AG04449 (cell line): ENCODE measurements at regions of chr11 and their contacts with region 1.

Region 1: DNA sequence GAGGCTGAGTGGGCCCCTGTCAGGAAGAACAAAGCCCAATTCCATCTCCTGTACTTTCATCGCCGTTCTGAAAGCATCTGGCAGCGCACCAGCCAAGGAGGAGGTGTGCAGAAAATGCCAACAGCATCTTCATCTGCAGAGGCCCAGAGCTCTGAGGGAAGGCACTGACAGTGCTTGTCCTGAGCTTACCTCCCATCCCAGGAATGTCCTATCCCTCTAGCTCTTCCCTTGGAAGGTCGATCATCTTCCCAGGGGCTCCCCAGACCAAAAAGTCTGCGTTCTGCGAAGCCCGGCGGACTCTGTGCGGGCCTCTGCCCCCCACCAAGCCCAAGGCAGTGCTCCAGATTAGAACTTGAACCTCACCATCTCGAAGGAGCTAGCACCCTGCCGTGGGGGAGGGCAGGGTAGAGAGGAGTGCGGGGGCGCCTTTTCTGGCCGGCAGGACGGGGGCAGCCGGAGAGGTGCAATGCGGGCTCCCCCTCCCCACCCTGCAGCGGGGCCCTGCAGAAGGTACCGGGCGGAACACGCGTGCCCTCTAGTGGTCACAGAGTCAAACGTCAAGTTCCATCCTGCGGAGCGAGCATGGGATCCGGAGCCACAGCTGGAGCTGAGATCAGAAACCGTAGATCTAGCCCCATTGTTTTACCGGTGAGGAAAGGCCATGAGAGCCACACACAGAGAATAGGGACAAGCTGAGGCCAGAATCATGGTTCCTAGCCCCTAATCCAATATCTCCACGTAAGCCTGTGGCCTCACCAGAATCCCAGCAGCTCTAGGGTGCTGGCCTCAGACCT is 5.0 kb downstream of the SCN2B start:
- DNase-seq: no peak
- H3K4me3 ChIP-seq: no peak overlapping the region
- CTCF ChIP-seq: peak; percentile 89

Region 2: DNA sequence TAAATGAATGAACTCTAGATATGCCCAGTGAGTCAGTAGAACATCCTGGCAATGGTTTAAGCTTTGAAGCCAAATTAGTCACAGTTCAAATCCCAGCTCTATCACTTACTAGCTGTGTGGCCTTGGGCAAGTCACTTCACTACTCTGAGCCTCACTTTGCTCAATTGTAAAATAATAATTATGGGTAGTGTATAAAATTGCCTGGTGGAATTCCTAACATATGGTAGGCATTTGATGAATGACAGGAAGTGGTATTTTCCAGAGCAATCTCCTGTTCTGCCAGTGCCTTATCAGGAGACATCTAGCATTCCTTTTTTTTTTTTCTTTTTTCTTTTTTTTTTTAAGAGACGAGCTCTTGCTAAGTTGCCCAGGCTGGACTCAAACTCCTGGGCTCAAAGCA is 31.9 kb before region 1 on chr11:
- CTCF ChIA-PET with region 1: interaction called, 63 read pairs
- POLR2A ChIA-PET with region 1: no interaction called
- DNase-seq: no peak
- H3K4me3 ChIP-seq: no peak overlapping the region
- CTCF ChIP-seq: no peak

Region 3: DNA sequence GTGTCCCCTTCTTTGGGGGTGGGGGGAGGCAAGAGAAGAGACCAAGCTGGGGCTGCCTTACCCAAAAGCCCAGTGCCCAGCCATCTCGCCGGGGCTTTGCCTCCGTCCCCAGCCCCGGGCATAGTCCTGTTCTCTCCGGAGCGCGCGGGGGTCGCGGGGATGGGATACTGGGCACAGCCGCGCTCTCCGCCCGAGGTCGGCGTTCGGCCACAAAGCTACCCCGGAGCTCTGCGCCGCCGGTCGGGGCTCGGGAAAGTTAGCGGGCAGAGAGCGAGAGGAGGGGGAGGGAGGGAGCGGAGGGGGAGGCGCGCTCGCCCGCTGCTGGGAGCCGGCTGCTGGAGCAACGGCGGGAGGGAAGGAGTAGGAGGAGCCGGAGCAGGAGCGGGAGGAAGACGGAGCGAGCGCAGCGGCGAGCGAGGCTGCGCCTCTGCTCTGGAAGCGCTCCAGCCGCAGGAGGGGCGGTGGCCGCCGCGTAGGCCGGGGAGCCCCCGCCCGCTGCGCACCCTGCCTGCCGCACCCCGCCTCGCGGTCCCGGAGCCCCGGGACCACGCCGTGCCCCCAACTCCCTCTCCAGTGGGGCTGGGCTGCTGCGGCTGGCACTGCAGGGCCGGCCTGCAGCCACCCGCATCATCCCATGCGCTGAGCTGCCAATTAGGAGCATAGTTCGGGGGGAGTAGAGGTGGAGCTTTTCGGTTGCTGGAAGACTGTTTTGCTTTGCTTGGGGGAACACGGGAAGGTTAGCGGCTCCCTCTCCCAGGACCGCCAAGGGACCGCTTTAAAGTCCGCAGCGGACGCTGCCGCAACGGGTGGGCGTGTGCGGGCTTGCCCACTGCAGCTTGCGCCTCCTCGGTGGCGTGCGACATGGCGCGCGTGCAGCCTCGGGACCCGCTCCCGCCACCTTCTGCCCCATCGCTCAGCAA is 18.7 kb before region 1 on chr11 and contains the start of gene SCN4B:
- CTCF ChIA-PET with region 1: interaction called, 38 read pairs
- POLR2A ChIA-PET with region 1: no interaction called
- DNase-seq: no peak
- H3K4me3 ChIP-seq: peak within 1 kb of the TSS; percentile 36
- CTCF ChIP-seq: no peak